Aorta (tissue), 5 donors: ENCODE measurements at regions of chr6 and their contacts with region 1.

Region 1: DNA sequence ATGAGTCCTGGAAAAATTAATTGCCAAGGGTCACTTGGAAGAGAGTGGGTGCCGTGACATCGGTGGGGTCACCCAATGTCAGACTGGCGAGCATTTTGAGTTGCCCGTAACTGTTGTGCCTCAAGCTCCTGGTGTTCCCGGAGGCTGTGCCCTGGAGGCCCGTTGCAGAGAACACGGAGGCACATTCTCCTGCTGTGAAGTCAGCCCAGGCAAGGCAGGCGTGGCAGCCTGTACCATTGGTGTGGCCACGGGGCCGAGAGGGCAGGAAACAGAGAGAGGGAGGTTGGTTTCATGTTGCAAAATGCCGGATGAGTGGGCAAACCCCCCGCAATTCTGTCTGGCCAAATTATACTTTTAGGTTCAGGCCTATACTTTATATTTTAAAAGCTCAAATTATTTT is 81.2 kb downstream of the THBS2 start:
- DNase-seq: peak; percentile 94 to 95
- ATAC-seq: peak; percentile 83
- H3K4me3 ChIP-seq: no peak overlapping the region
- H3K27ac ChIP-seq: peak overlapping the region; percentile 83 to 99
- H3K4me1 ChIP-seq: no peaks in the 10 kb centered on the region
- H3K27me3 ChIP-seq: no peaks in the 10 kb centered on the region

Region 2: GRCh38 chr6:168962886-168963285 is 209.6 kb before region 1 on chr6:
- intact Hi-C with region 1: loop called in 1 of 2 experiments (anchors 5 kb)
- DNase-seq: peak; percentile 62 to 78
- ATAC-seq: peak; percentile 56
- H3K4me3 ChIP-seq: no peak overlapping the region
- H3K27ac ChIP-seq: no peak overlapping the region
- H3K4me1 ChIP-seq: no peaks in the 10 kb centered on the region
- H3K27me3 ChIP-seq: no peaks in the 10 kb centered on the region

Region 3: GRCh38 chr6:169070506-169071176 is 101.8 kb before region 1 on chr6:
- intact Hi-C with region 1: loop called in 1 of 2 experiments (anchors 1 kb)
- DNase-seq: peak; percentile 94 to 95
- ATAC-seq: peak; percentile 96
- H3K4me3 ChIP-seq: no peak overlapping the region
- H3K27ac ChIP-seq: peak overlapping the region; percentile 83 to 89
- H3K4me1 ChIP-seq: no peaks in the 10 kb centered on the region
- H3K27me3 ChIP-seq: no peaks in the 10 kb centered on the region

Region 4: DNA sequence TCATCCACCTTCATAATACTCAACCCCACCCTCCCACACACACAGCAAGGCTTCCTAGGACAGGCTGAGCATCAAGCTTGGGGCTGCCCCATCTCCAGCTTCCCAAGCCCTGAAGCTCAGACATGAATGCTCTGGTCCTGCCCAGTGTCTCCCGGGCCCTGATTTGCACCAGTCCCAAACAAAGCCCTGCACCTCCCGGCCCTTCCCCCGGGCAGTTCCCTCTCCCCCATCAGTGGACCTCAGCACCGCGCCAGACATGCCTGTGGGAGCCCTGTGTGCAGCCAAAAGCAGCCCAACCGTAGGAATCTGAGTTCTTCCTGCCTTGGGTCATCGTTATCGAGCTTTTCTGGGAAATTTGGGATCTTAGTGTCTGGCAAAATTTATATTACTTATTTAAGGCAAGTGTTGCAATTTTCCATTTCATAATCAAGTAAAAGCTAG is 17.7 kb after region 1 on chr6:
- intact Hi-C with region 1: loop called in 1 of 2 experiments (anchors 1 kb)
- DNase-seq: peak; percentile 92 to 94
- ATAC-seq: peak; percentile 95
- H3K4me3 ChIP-seq: no peak overlapping the region
- H3K27ac ChIP-seq: peak overlapping the region; percentile 83 to 97
- H3K4me1 ChIP-seq: peaks cover 0 to 1% of the 10 kb centered on the region in 2 donors
- H3K27me3 ChIP-seq: no peaks in the 10 kb centered on the region

Region 5: GRCh38 chr6:169253337-169254238 is 81.1 kb after region 1 on chr6 and contains the start of gene THBS2:
- intact Hi-C with region 1: loop called in 1 of 2 experiments (anchors 5 kb)
- DNase-seq: peak; percentile 91 to 94
- ATAC-seq: peak; percentile 86
- H3K4me3 ChIP-seq: peak within 1 kb of the TSS; percentile 60 to 68
- H3K27ac ChIP-seq: peak within 1 kb of the TSS in 1 of 2 donors; percentile 73
- H3K4me1 ChIP-seq: no peaks in the 10 kb centered on the region
- H3K27me3 ChIP-seq: no peaks in the 10 kb centered on the region
- total RNA-seq, gene THBS2: 700 to 1,026 TPM